CD8-positive, alpha-beta T cell (primary cell): ENCODE measurements at regions of chr10 and their contacts with region 1.

Region 1: DNA sequence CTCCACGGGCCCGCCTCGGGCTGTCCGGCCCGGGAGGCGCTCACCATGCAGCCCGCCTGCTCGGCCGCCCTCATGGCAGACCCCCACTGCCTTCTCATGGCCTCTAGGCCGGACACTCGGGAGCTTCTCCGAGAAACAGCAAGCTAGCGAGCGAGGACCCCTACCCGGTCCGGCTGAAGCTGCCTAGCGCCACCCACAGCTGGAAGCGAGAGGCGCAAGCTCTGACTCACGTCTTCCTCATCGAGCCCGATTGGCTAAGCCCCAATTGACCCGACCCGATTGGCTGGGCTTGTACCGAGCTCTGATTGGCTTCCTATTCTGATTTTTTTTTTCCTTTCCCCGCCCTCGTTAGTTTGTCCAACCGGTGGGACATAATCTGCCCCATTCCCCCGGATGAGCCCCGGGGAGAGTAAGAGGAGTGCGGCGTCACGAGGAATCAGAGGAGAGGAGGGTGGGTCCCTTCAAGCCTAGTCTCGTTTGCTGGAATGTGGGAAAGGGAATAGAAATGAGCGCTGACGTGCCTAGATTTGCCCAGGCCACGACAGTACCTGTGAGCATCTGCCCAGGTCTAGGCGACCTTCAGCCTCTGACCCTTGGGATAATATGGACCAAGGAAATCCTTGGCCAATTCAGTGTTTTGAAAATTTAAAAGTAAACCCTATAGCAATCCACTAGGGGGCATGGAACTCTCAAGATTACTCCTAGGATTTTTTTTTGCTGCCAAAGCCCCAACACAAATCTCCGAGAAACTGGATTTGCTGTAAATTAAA is at the start of gene TYSND1:
- DNase-seq: peak; percentile 83 to 97 (median 91)
- ATAC-seq: peak; percentile 80
- H3K4me3 ChIP-seq: peak within 1 kb of the TSS; percentile 76 to 85
- H3K4me3 Mint-ChIP-seq: peak within 1 kb of the TSS; percentile 90
- H3K27ac ChIP-seq: peak within 1 kb of the TSS; percentile 84 to 87
- H3K27ac Mint-ChIP-seq: peak within 1 kb of the TSS; percentile 94
- H3K4me1 ChIP-seq: peaks cover 30% of the 10 kb centered on the region
- H3K4me1 Mint-ChIP-seq: peaks cover 46% of the 10 kb centered on the region
- H3K27me3 ChIP-seq: no peaks in the 10 kb centered on the region
- H3K27me3 Mint-ChIP-seq: no peaks in the 10 kb centered on the region
- CTCF ChIP-seq: peak; percentile 44
- total RNA-seq, gene TYSND1: 9.6 to 10.3 TPM

Region 2: GRCh38 chr10:70084189-70084588 is 62.5 kb before region 1 on chr10:
- CTCF ChIA-PET with region 1: interaction called, 20 read pairs
- POLR2A ChIA-PET with region 1: interaction called, 4 read pairs
- intact Hi-C with region 1: loop called in 1 of 2 experiments (anchors 1 kb)
- DNase-seq: peak in 2 of 9 experiments; percentile 15 to 31
- ATAC-seq: no peak
- H3K4me3 ChIP-seq: no peak overlapping the region
- H3K4me3 Mint-ChIP-seq: no peak overlapping the region
- H3K27ac ChIP-seq: no peak overlapping the region
- H3K27ac Mint-ChIP-seq: no peak overlapping the region
- H3K4me1 ChIP-seq: no peaks in the 10 kb centered on the region
- H3K4me1 Mint-ChIP-seq: no peaks in the 10 kb centered on the region
- H3K27me3 ChIP-seq: no peaks in the 10 kb centered on the region
- H3K27me3 Mint-ChIP-seq: no peaks in the 10 kb centered on the region
- CTCF ChIP-seq: no peak

Region 3: DNA sequence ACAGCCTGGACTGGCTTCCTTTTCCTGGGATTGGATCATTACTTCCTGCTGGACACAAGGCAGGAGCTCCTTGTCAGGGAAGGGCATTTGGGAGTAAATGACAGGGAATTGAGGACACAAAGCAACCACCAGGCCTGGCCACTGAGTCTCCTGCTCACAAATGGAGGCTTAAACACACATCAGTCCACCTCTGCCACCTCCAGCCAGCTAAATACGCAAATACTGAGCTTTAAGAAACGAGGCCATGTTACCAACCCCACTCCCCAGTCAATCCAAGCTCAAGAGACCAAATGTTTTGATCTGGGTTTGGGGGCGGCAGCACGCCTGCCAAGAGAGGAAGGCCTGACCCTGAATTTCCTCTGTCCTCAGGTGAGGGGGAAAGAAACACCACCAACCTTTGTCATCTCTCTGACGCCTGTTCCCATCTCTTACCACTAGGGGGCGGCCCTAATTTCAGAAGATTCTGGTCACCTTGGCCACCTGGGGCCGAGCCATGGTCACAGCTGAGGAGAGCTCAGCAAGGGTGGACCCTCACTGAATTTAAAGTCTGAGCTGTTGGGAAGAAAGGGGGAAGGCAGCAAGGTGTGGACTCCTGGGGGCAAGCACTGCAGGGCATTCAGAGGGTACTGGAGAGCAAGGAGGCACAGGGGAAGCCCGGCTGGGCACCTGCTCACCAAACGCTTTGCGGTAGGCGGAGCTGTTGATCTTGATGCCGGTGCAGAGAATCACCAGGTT is 30.6 kb before region 1 on chr10:
- CTCF ChIA-PET with region 1: interaction called, 72 read pairs
- POLR2A ChIA-PET with region 1: interaction called, 18 read pairs
- intact Hi-C with region 1: loop called (anchors 1 kb)
- DNase-seq: peak; percentile 25 to 76 (median 63)
- ATAC-seq: peak; percentile 89
- H3K4me3 ChIP-seq: no peak overlapping the region
- H3K4me3 Mint-ChIP-seq: no peak overlapping the region
- H3K27ac ChIP-seq: no peak overlapping the region
- H3K27ac Mint-ChIP-seq: no peak overlapping the region
- H3K4me1 ChIP-seq: peaks cover 9% of the 10 kb centered on the region
- H3K4me1 Mint-ChIP-seq: peaks cover 7% of the 10 kb centered on the region
- H3K27me3 ChIP-seq: no peaks in the 10 kb centered on the region
- H3K27me3 Mint-ChIP-seq: no peaks in the 10 kb centered on the region
- CTCF ChIP-seq: peak; percentile 93

Region 4: GRCh38 chr10:70132098-70133029 is 14.3 kb before region 1 on chr10 and contains the start of gene AIFM2:
- CTCF ChIA-PET with region 1: interaction called, 19 read pairs
- POLR2A ChIA-PET with region 1: interaction called, 11 read pairs
- intact Hi-C with region 1: loop called in 1 of 2 experiments (anchors 1 kb)
- DNase-seq: peak in 8 of 9 experiments; percentile 17 to 73 (median 50)
- ATAC-seq: peak; percentile 94
- H3K4me3 ChIP-seq: peak within 1 kb of the TSS; percentile 75 to 82
- H3K4me3 Mint-ChIP-seq: peak within 1 kb of the TSS; percentile 92
- H3K27ac ChIP-seq: peak within 1 kb of the TSS; percentile 47 to 50
- H3K27ac Mint-ChIP-seq: peak within 1 kb of the TSS; percentile 94
- H3K4me1 ChIP-seq: peaks cover 15% of the 10 kb centered on the region
- H3K4me1 Mint-ChIP-seq: peaks cover 26% of the 10 kb centered on the region
- H3K27me3 ChIP-seq: no peaks in the 10 kb centered on the region
- H3K27me3 Mint-ChIP-seq: no peaks in the 10 kb centered on the region
- CTCF ChIP-seq: no peak
- total RNA-seq, gene AIFM2: 2.6 to 3.6 TPM

Region 5: GRCh38 chr10:70169649-70170364 is 23.1 kb after region 1 on chr10:
- CTCF ChIA-PET with region 1: interaction called, 36 read pairs
- POLR2A ChIA-PET with region 1: interaction called, 69 read pairs
- intact Hi-C with region 1: loop called (anchors 1 kb)
- DNase-seq: peak in 3 of 9 experiments; percentile 28 to 51 (median 29)
- ATAC-seq: peak; percentile 13
- H3K4me3 ChIP-seq: peak overlapping the region; percentile 65 to 90
- H3K4me3 Mint-ChIP-seq: peak overlapping the region; percentile 94
- H3K27ac ChIP-seq: peak overlapping the region; percentile 83 to 94
- H3K27ac Mint-ChIP-seq: peak overlapping the region; percentile 97
- H3K4me1 ChIP-seq: peaks cover 57% of the 10 kb centered on the region
- H3K4me1 Mint-ChIP-seq: peaks cover 60% of the 10 kb centered on the region
- H3K27me3 ChIP-seq: no peaks in the 10 kb centered on the region
- H3K27me3 Mint-ChIP-seq: no peaks in the 10 kb centered on the region
- CTCF ChIP-seq: no peak

Region 6: DNA sequence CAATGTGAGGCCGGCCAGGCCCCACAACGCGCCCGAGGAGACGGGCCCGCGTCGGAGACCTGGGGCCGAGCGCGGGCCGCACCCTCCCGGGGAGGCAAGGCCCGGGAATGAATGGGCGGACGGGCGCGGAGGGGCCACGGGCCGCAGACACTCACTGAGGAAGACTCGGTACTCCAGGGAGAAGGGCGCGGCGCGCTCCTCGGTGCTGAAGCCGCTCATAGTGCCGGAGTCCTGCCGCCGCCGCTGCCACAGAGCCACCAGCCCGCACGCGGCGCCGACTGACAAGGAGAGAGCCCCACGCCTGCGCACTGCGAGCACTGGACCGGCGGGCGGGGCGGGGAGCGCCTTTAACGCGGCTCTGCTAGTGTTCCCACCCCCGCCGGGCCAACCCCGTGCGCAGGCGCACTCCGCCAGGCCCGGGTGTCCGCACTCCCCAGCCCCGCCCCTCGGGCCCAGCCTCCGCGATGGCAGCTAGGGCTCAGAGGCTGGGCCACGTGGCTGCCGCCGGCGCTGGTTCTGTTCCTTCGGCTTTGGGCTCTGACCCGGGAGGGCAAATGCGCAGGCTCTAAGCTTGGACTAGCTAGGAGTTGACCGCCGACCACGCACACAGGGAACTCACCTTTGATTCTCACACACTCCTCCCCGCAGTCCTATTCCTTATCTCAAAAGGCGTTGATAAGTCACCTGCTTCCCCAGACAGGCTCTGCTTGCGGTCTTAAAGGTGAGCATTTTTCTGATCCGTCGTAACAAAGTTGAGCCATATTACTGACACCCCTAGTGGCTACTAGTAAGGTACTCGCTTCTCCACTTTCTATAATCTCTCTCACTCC is 86.7 kb after region 1 on chr10 and contains the start of gene PPA1:
- CTCF ChIA-PET with region 1: interaction called, 9 read pairs
- POLR2A ChIA-PET with region 1: interaction called, 13 read pairs
- intact Hi-C with region 1: loop called (anchors 1 kb)
- DNase-seq: peak; percentile 98 to 100 (median 99)
- ATAC-seq: peak; percentile 93
- H3K4me3 ChIP-seq: peak within 1 kb of the TSS; percentile 87 to 90
- H3K4me3 Mint-ChIP-seq: peak within 1 kb of the TSS; percentile 89
- H3K27ac ChIP-seq: peak within 1 kb of the TSS; percentile 74 to 80
- H3K27ac Mint-ChIP-seq: peak within 1 kb of the TSS; percentile 93
- H3K4me1 ChIP-seq: peaks cover 9% of the 10 kb centered on the region
- H3K4me1 Mint-ChIP-seq: peaks cover 36% of the 10 kb centered on the region
- H3K27me3 ChIP-seq: no peaks in the 10 kb centered on the region
- H3K27me3 Mint-ChIP-seq: peaks cover 4% of the 10 kb centered on the region
- CTCF ChIP-seq: no peak
- total RNA-seq, gene PPA1: 79.9 to 83.1 TPM

Region 7: DNA sequence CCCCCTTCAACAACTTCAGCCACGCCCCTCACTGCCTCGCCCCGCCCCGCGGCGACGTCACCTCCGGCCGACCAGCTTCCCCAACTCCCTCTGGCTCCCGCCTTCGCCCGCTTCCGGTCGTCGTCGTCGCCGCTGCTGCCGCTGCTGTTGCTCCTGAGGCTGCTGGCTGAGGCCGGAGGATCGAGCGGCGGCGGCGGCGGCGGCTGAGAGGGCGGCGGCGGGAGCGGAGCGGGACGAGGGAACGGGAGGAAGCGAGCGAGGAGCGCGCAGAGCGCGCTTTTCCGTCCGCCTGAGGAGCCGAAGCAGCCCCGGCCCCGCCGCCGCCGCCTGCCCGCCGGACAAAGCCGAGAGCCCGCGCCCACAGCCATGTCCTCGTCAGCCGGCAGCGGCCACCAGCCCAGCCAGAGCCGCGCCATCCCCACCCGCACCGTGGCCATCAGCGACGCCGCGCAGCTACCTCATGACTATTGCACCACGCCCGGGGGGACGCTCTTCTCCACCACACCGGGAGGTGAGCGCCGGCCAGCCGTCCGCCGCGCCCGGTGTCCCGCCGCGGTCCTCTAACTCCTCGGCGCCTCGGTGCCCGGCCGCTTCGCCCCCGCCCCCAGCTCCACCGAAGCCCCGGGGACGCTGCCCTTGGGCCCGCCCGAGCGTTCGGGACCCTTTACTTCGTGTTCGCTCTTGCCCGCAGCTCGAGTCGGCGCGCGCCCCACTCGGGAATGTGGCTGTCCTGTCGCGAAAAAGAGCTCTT is 257.5 kb after region 1 on chr10 and contains the start of gene EIF4EBP2:
- CTCF ChIA-PET with region 1: interaction called, 3 read pairs
- POLR2A ChIA-PET with region 1: interaction called, 9 read pairs
- intact Hi-C with region 1: loop called (anchors 1 to 5 kb)
- DNase-seq: peak; percentile 95 to 100 (median 98)
- ATAC-seq: peak; percentile 97
- H3K4me3 ChIP-seq: peak within 1 kb of the TSS; percentile 63 to 77
- H3K4me3 Mint-ChIP-seq: peak within 1 kb of the TSS; percentile 97
- H3K27ac ChIP-seq: peak within 1 kb of the TSS; percentile 73 to 76
- H3K27ac Mint-ChIP-seq: peak within 1 kb of the TSS; percentile 93
- H3K4me1 ChIP-seq: peaks cover 23% of the 10 kb centered on the region
- H3K4me1 Mint-ChIP-seq: peaks cover 46% of the 10 kb centered on the region
- H3K27me3 ChIP-seq: no peaks in the 10 kb centered on the region
- H3K27me3 Mint-ChIP-seq: no peaks in the 10 kb centered on the region
- CTCF ChIP-seq: no peak
- total RNA-seq, gene EIF4EBP2: 22.4 TPM